Dorsolateral prefrontal cortex (tissue), 120 donors: ENCODE measurements at regions of chr11 and their contacts with region 1.

Region 1: GRCh38 chr11:33773987-33774735 is at the start of gene FBXO3:
- DNase-seq: peak; percentile 65 to 89 (median 84)
- H3K4me3 ChIP-seq: peak within 1 kb of the TSS; percentile 62 to 100 (median 95)
- H3K27ac ChIP-seq: peak within 1 kb of the TSS; percentile 4 to 96 (median 82)
- H3K27me3 ChIP-seq: no peaks in the 10 kb centered on the region
- CTCF ChIP-seq: peak in 9 of 56 donors; percentile 9 to 32 (median 19)
- total RNA-seq, gene FBXO3: 26.6 to 67.9 (median 53.5) TPM

Region 2: GRCh38 chr11:33161120-33162005 is 612.8 kb before region 1 on chr11 and contains the start of gene CSTF3:
- intact Hi-C with region 1: loop called in 1 of 2 experiments (anchors 10 kb)
- DNase-seq: peak; percentile 100
- H3K4me3 ChIP-seq: peak within 1 kb of the TSS; percentile 63 to 97 (median 86)
- H3K27ac ChIP-seq: peak within 1 kb of the TSS; percentile 41 to 95 (median 87)
- H3K27me3 ChIP-seq: no peaks in the 10 kb centered on the region
- CTCF ChIP-seq: peak in 55 of 56 donors; percentile 19 to 76 (median 58)
- total RNA-seq, gene CSTF3: 20.9 to 50.5 (median 35.5) TPM

Region 3: GRCh38 chr11:33700425-33701271 is 73.5 kb before region 1 on chr11 and contains the start of gene C11orf91:
- intact Hi-C with region 1: loop called in 1 of 2 experiments (anchors 2 kb)
- DNase-seq: peak; percentile 81 to 98 (median 92)
- H3K4me3 ChIP-seq: peak within 1 kb of the TSS; percentile 51 to 83 (median 71)
- H3K27ac ChIP-seq: peak within 1 kb of the TSS; percentile 7 to 90 (median 79)
- H3K27me3 ChIP-seq: no peaks in the 10 kb centered on the region
- CTCF ChIP-seq: peak in 11 of 56 donors; percentile 5 to 33 (median 14)
- total RNA-seq, gene C11orf91: 0.50 to 1.8 (median 0.85) TPM in 26 of 120 experiments, not detected in the others

Region 4: DNA sequence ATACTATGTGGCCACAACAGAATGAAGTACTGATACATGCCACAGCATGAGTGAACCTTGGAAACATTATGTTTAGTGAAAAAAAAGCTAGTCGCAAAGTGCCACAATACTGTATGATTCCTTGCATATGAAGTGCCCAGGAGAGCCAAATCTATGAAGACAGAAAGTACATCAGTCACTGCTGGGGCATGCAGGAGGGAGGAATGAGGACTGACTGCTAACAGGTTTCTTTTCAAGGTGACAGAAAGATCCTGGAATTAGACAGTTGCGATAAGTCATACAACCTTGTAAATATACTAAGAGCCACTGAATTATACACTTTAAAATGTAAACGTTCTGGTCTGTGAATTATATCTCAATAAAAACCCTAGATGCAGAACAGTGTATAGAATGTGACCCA is 61.7 kb before region 1 on chr11:
- intact Hi-C with region 1: no loop called
- DNase-seq: no peak
- H3K4me3 ChIP-seq: no peak overlapping the region
- H3K27ac ChIP-seq: no peak overlapping the region
- H3K27me3 ChIP-seq: no peaks in the 10 kb centered on the region
- CTCF ChIP-seq: no peak

Region 5: DNA sequence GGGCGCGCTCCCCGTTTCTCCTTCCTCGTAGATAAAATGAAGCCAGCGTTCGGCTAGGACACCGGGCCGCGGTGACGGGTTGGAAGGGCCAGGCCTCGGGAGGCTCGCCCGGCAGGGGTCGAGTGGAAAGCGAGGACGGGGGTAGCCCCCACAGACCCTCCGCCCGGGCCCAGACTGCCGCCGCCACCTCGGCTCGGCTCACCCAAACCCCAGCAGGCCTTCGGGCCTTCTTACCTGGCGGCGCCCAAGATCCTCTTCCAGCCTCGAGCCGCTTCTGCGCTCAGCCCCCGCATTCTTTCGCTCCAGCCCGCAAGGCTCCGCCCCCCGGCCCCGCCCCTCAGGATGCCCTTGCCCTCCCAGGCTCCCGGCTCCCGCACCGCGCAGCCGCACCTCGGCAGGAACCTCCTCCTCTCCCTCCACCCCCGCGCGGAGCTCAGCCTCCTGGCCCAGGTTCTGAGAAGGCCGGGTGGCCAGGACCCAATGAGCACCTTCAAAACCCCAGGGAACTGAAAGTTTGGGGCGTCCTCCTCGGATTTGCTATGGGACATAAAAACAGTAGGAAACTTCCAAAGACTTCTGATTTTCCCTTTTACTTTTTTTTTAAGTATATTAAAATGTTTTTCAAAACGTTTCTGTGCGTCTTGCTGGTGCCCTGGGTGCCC is 37.9 kb before region 1 on chr11 and contains the start of gene CD59:
- intact Hi-C with region 1: loop called in 1 of 2 experiments (anchors 5 kb)
- DNase-seq: peak; percentile 83 to 98 (median 92)
- H3K4me3 ChIP-seq: peak within 1 kb of the TSS; percentile 67 to 98 (median 91)
- H3K27ac ChIP-seq: peak within 1 kb of the TSS in 58 of 59 donors; percentile 17 to 98 (median 87)
- H3K27me3 ChIP-seq: no peaks in the 10 kb centered on the region
- CTCF ChIP-seq: peak in 4 of 56 donors; percentile 10 to 35 (median 18)
- total RNA-seq, gene CD59: 235 to 598 (median 367) TPM